CD8-positive, alpha-beta T cell (primary cell): ENCODE measurements at regions of chr1 and their contacts with region 1.

Region 1: GRCh38 chr1:23825076-23825761 is at the start of gene HMGCL:
- DNase-seq: peak; percentile 70 to 95 (median 89)
- ATAC-seq: peak; percentile 98
- H3K4me3 ChIP-seq: peak within 1 kb of the TSS; percentile 96 to 97
- H3K4me3 Mint-ChIP-seq: peak within 1 kb of the TSS; percentile 93
- H3K27ac ChIP-seq: peak within 1 kb of the TSS; percentile 91 to 94
- H3K27ac Mint-ChIP-seq: peak within 1 kb of the TSS; percentile 96
- H3K4me1 ChIP-seq: peaks cover 10% of the 10 kb centered on the region
- H3K4me1 Mint-ChIP-seq: peaks cover 28% of the 10 kb centered on the region
- H3K27me3 ChIP-seq: no peaks in the 10 kb centered on the region
- H3K27me3 Mint-ChIP-seq: no peaks in the 10 kb centered on the region
- CTCF ChIP-seq: no peak
- total RNA-seq, gene HMGCL: 9.2 to 10.2 TPM

Region 2: GRCh38 chr1:23039308-23039826 is 785.9 kb before region 1 on chr1:
- CTCF ChIA-PET with region 1: no interaction called
- POLR2A ChIA-PET with region 1: no interaction called
- intact Hi-C with region 1: no loop called
- DNase-seq: no peak
- ATAC-seq: no peak
- H3K4me3 ChIP-seq: no peak overlapping the region
- H3K4me3 Mint-ChIP-seq: no peak overlapping the region
- H3K27ac ChIP-seq: no peak overlapping the region
- H3K27ac Mint-ChIP-seq: peak overlapping the region; percentile 2
- H3K4me1 ChIP-seq: peaks cover 4% of the 10 kb centered on the region
- H3K4me1 Mint-ChIP-seq: peaks cover 45% of the 10 kb centered on the region
- H3K27me3 ChIP-seq: no peaks in the 10 kb centered on the region
- H3K27me3 Mint-ChIP-seq: no peaks in the 10 kb centered on the region
- CTCF ChIP-seq: no peak

Region 3: DNA sequence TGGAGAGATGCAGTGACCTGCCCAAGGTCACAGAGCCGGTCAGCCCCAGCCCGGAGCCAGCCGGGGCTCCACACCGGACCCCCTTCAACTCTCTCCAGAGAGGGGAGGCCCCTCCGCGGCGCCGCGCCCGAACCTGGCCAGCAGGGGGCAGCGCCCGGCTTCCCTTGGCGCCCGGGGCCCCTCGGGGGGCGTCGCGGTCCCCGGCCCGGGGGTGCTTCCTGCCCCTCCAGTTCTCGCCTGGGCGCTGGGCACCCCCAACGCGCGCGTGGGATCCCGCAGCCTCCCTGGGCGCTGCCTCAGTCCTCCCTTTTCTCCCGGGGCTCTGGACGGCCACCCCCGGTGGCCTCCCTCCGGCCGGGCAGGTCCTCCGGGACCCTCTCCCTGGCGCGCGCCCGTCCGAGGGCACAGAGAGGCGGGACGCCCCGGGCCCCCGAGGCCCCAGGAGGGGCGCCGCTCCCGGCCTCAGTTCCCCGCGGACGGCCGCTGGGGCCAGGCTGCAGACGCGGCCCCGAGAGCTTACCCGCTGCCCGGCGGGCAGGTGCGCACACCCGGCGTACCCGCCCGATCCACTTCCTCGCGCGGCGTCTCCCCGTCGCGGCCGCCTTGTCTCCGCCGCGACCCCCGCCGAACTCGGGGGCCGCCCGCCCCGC is 608.3 kb before region 1 on chr1:
- CTCF ChIA-PET with region 1: interaction called, 11 read pairs
- POLR2A ChIA-PET with region 1: no interaction called
- intact Hi-C with region 1: no loop called
- DNase-seq: peak in 8 of 9 experiments; percentile 2 to 57 (median 32)
- ATAC-seq: peak; percentile 61
- H3K4me3 ChIP-seq: peak overlapping the region in 1 of 2 experiments; percentile 19
- H3K4me3 Mint-ChIP-seq: peak overlapping the region; percentile 62
- H3K27ac ChIP-seq: no peak overlapping the region
- H3K27ac Mint-ChIP-seq: no peak overlapping the region
- H3K4me1 ChIP-seq: peaks cover 9% of the 10 kb centered on the region
- H3K4me1 Mint-ChIP-seq: peaks cover 7% of the 10 kb centered on the region
- H3K27me3 ChIP-seq: peaks cover 16% of the 10 kb centered on the region in 2 experiments
- H3K27me3 Mint-ChIP-seq: peaks cover 65% of the 10 kb centered on the region
- CTCF ChIP-seq: peak; percentile 67

Region 4: GRCh38 chr1:23736437-23737134 is 88.6 kb before region 1 on chr1:
- CTCF ChIA-PET with region 1: no interaction called
- POLR2A ChIA-PET with region 1: no interaction called
- intact Hi-C with region 1: no loop called
- DNase-seq: no peak
- ATAC-seq: no peak
- H3K4me3 ChIP-seq: no peak overlapping the region
- H3K4me3 Mint-ChIP-seq: no peak overlapping the region
- H3K27ac ChIP-seq: no peak overlapping the region
- H3K27ac Mint-ChIP-seq: no peak overlapping the region
- H3K4me1 ChIP-seq: no peaks in the 10 kb centered on the region
- H3K4me1 Mint-ChIP-seq: no peaks in the 10 kb centered on the region
- H3K27me3 ChIP-seq: no peaks in the 10 kb centered on the region
- H3K27me3 Mint-ChIP-seq: no peaks in the 10 kb centered on the region
- CTCF ChIP-seq: no peak

Region 5: GRCh38 chr1:23751050-23751814 is 74.0 kb before region 1 on chr1:
- CTCF ChIA-PET with region 1: no interaction called
- POLR2A ChIA-PET with region 1: no interaction called
- intact Hi-C with region 1: no loop called
- DNase-seq: peak in 4 of 9 experiments; percentile 22 to 53 (median 40)
- ATAC-seq: peak; percentile 59
- H3K4me3 ChIP-seq: no peak overlapping the region
- H3K4me3 Mint-ChIP-seq: no peak overlapping the region
- H3K27ac ChIP-seq: no peak overlapping the region
- H3K27ac Mint-ChIP-seq: peak overlapping the region; percentile 42
- H3K4me1 ChIP-seq: peaks cover 8% of the 10 kb centered on the region
- H3K4me1 Mint-ChIP-seq: peaks cover 32% of the 10 kb centered on the region
- H3K27me3 ChIP-seq: no peaks in the 10 kb centered on the region
- H3K27me3 Mint-ChIP-seq: no peaks in the 10 kb centered on the region
- CTCF ChIP-seq: peak; percentile 50

Region 6: GRCh38 chr1:23777979-23778814 is 47.0 kb before region 1 on chr1 and contains the start of gene PITHD1:
- CTCF ChIA-PET with region 1: no interaction called
- POLR2A ChIA-PET with region 1: interaction called, 3 read pairs
- intact Hi-C with region 1: loop called (anchors 1 to 10 kb)
- DNase-seq: peak; percentile 59 to 91 (median 78)
- ATAC-seq: peak; percentile 81
- H3K4me3 ChIP-seq: peak within 1 kb of the TSS; percentile 88 to 99
- H3K4me3 Mint-ChIP-seq: peak within 1 kb of the TSS; percentile 94
- H3K27ac ChIP-seq: peak within 1 kb of the TSS; percentile 87 to 95
- H3K27ac Mint-ChIP-seq: peak within 1 kb of the TSS; percentile 97
- H3K4me1 ChIP-seq: peaks cover 25% of the 10 kb centered on the region
- H3K4me1 Mint-ChIP-seq: peaks cover 54% of the 10 kb centered on the region
- H3K27me3 ChIP-seq: no peaks in the 10 kb centered on the region
- H3K27me3 Mint-ChIP-seq: no peaks in the 10 kb centered on the region
- CTCF ChIP-seq: no peak
- total RNA-seq, gene PITHD1: 112 to 117 TPM

Region 7: GRCh38 chr1:23838401-23838866 is 13.2 kb after region 1 on chr1:
- CTCF ChIA-PET with region 1: interaction called, 4 read pairs
- POLR2A ChIA-PET with region 1: interaction called, 6 read pairs
- intact Hi-C with region 1: loop called in 1 of 2 experiments (anchors 1 kb)
- DNase-seq: peak; percentile 55 to 91 (median 81)
- ATAC-seq: peak; percentile 100
- H3K4me3 ChIP-seq: peak overlapping the region; percentile 37 to 39
- H3K4me3 Mint-ChIP-seq: peak overlapping the region; percentile 79
- H3K27ac ChIP-seq: no peak overlapping the region
- H3K27ac Mint-ChIP-seq: peak overlapping the region; percentile 64
- H3K4me1 ChIP-seq: peaks cover 5% of the 10 kb centered on the region
- H3K4me1 Mint-ChIP-seq: peaks cover 11% of the 10 kb centered on the region
- H3K27me3 ChIP-seq: peaks cover 0 to 2% of the 10 kb centered on the region in 2 experiments
- H3K27me3 Mint-ChIP-seq: no peaks in the 10 kb centered on the region
- CTCF ChIP-seq: no peak

Region 8: DNA sequence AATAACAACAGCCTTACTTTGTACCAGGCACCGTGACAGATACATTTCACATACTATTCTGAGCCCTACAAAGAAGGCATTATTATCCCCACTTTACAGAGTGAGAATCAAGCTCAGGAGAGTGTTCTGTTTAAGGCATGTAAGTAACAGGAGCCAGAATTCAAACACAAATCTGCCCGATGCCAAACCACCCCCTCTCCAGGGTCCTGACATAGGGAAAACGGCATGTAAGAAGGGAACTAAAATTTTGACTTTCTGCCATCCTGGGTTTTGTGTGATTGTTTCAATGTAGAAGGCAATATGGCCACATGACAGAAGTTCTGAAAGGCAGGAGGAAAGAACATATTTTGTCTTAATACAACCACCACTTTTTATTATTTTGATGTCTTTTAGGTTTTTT is 37.4 kb after region 1 on chr1:
- CTCF ChIA-PET with region 1: no interaction called
- POLR2A ChIA-PET with region 1: no interaction called
- intact Hi-C with region 1: no loop called
- DNase-seq: no peak
- ATAC-seq: no peak
- H3K4me3 ChIP-seq: no peak overlapping the region
- H3K4me3 Mint-ChIP-seq: no peak overlapping the region
- H3K27ac ChIP-seq: no peak overlapping the region
- H3K27ac Mint-ChIP-seq: no peak overlapping the region
- H3K4me1 ChIP-seq: peaks cover 15% of the 10 kb centered on the region
- H3K4me1 Mint-ChIP-seq: peaks cover 15% of the 10 kb centered on the region
- H3K27me3 ChIP-seq: no peaks in the 10 kb centered on the region
- H3K27me3 Mint-ChIP-seq: no peaks in the 10 kb centered on the region
- CTCF ChIP-seq: no peak